ENCODE measurements at regions of chr10 and their contacts with region 1.

Region 1: GRCh38 chr10:35126530-35127296 is at the start of gene CREM:
- DNase-seq: peak; percentile 97
- H3K4me3 Mint-ChIP-seq: peak within 1 kb of the TSS; percentile 90
- H3K27ac Mint-ChIP-seq: peak within 1 kb of the TSS; percentile 98
- H3K4me1 Mint-ChIP-seq: peaks cover 47% of the 10 kb centered on the region
- H3K27me3 Mint-ChIP-seq: no peaks in the 10 kb centered on the region
- total RNA-seq, gene CREM: 189 and 190 TPM in 2 replicates

Region 2: GRCh38 chr10:35058134-35058533 is 68.6 kb before region 1 on chr10:
- intact Hi-C with region 1: no loop called
- DNase-seq: no peak
- H3K4me3 Mint-ChIP-seq: no peak overlapping the region
- H3K27ac Mint-ChIP-seq: no peak overlapping the region
- H3K4me1 Mint-ChIP-seq: peaks cover 5% of the 10 kb centered on the region
- H3K27me3 Mint-ChIP-seq: no peaks in the 10 kb centered on the region

Region 3: DNA sequence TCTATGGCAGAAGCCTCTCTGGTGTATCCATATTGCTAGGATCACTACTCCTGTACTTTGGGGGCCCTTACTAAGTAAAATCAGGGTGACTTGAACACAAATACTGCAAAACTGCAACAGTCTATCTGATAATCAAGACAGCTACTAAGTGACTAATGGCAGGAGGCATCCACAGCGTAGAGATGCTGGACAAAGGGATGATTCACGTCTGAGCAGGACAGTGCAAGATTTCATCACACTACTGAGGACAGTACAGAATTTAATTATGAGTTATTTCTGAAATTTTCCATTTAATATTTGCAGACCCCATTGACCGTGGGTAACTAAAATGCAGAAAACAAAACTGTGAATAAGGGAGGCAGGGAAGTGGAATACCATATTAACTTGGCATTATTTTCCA is 47.0 kb before region 1 on chr10:
- intact Hi-C with region 1: no loop called
- DNase-seq: no peak
- H3K4me3 Mint-ChIP-seq: no peak overlapping the region
- H3K27ac Mint-ChIP-seq: no peak overlapping the region
- H3K4me1 Mint-ChIP-seq: peaks cover 8% of the 10 kb centered on the region
- H3K27me3 Mint-ChIP-seq: no peaks in the 10 kb centered on the region

Region 4: DNA sequence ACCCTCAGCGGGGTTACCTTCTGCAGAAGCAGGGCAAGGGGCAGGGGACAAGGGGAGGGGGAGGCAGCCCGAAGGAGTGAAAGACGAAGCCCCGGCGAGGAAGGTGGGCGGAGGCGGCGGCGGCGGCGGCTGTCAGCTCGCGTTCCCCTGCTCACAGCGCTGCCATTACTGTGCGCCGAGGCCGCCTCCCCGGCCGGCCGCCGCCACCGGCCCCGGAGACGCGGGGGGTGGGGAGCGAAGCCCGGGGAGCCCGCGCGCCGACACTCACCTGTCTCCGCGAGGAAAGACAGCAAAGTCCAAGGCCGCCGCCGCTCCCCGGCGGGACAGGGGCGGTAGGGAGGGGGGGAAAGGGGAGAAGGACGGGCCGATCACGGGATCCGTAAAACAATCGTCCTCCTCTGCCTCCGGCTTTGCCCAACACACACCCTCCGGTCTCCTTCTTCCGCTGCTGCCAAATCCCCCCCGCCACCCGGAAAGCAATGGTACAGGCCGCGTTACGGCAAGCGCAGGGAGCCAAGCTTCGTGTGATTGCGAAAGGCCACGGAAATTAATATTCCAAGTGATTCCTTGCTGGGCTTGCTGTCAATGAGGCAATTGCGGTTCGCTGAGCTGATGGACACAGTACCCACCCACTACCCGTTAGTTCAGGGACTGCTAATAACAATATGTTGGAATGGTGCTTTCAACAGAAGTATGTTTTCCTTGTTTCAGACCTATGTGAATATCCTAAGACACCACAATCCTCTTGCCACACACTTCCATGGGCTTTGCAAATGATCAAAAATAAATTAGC is 36.4 kb before region 1 on chr10 and contains the start of gene CUL2:
- intact Hi-C with region 1: loop called (anchors 2 kb)
- DNase-seq: peak; percentile 91
- H3K4me3 Mint-ChIP-seq: peak within 1 kb of the TSS; percentile 94
- H3K27ac Mint-ChIP-seq: peak within 1 kb of the TSS; percentile 95
- H3K4me1 Mint-ChIP-seq: peaks cover 35% of the 10 kb centered on the region
- H3K27me3 Mint-ChIP-seq: no peaks in the 10 kb centered on the region
- total RNA-seq, gene CUL2: 43.0 and 49.0 TPM in 2 replicates

Region 5: DNA sequence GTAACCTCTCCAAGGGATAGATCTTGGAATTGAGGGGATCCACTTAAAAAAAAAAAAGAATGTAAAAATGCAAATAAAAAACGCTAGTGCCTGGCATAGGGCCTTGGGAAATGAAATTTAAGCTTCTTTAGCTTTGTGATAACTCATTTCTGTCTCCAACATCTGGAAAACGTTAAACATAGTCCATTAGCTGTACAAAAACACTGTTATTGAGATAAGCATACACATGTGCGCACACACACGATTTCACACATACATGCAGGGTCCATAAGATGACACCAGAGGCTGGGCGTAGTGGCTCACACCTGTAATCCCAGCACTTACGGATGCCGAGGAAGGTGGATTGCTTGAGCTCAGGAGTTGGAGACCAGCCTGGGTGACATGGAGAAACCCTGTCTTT is 22.8 kb before region 1 on chr10:
- intact Hi-C with region 1: no loop called
- DNase-seq: no peak
- H3K4me3 Mint-ChIP-seq: no peak overlapping the region
- H3K27ac Mint-ChIP-seq: no peak overlapping the region
- H3K4me1 Mint-ChIP-seq: no peaks in the 10 kb centered on the region
- H3K27me3 Mint-ChIP-seq: peaks cover 6% of the 10 kb centered on the region

Region 6: GRCh38 chr10:35195361-35196306 is 68.9 kb after region 1 on chr10:
- intact Hi-C with region 1: loop called (anchors 1 kb)
- DNase-seq: peak; percentile 76
- H3K4me3 Mint-ChIP-seq: peak overlapping the region; percentile 95
- H3K27ac Mint-ChIP-seq: peak overlapping the region; percentile 99
- H3K4me1 Mint-ChIP-seq: peaks cover 44% of the 10 kb centered on the region
- H3K27me3 Mint-ChIP-seq: no peaks in the 10 kb centered on the region

Region 7: GRCh38 chr10:35271086-35271858 is 144.6 kb after region 1 on chr10:
- intact Hi-C with region 1: no loop called
- DNase-seq: no peak
- H3K4me3 Mint-ChIP-seq: no peak overlapping the region
- H3K27ac Mint-ChIP-seq: no peak overlapping the region
- H3K4me1 Mint-ChIP-seq: peaks cover 15% of the 10 kb centered on the region
- H3K27me3 Mint-ChIP-seq: no peaks in the 10 kb centered on the region

Region 8: DNA sequence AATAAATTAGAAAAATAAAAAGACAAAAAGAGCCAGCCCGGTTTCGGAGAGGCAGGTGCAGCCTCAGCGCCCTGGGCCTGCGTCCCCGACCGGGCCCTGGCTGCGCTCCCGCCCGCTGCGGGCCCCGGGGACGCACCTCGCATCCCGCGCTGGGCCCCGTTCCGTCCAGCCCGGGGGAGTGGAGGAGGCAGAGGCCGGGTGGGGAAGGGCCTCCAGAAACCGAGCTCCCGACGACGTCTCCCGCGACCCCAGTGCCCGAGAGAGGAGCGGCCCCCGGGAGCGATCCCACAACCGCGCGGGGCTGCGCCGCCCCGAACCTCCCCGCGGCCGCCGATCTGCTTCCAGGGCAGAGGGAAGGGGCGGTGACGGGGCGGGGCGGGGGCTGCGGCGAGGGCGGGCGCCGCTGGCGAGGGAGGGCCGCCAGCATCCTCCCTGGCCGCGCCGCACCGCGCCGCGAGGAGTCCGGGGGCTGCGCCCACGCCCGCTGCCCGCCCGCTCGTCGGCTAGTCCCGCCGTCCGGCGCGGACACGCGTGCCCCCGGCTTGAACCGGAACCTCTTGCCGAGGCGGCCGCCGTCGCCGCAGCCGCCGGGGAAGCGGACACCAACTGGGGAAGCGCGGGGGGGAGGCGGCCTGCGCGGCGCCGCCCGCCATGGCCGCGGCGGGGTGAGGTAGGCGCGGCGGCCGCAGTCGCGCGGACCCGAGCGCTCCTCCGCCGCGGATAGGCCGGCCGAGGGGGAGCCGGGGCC is 209.5 kb after region 1 on chr10 and contains the start of gene CCNY:
- intact Hi-C with region 1: loop called (anchors 2 kb)
- DNase-seq: peak; percentile 66
- H3K4me3 Mint-ChIP-seq: peak within 1 kb of the TSS; percentile 90
- H3K27ac Mint-ChIP-seq: peak within 1 kb of the TSS; percentile 89
- H3K4me1 Mint-ChIP-seq: peaks cover 53% of the 10 kb centered on the region
- H3K27me3 Mint-ChIP-seq: no peaks in the 10 kb centered on the region
- total RNA-seq, gene CCNY: 60.4 and 67.1 TPM in 2 replicates

Region 9: GRCh38 chr10:35442028-35442427 is 315.3 kb after region 1 on chr10:
- intact Hi-C with region 1: loop called (anchors 5 kb)
- DNase-seq: no peak
- H3K4me3 Mint-ChIP-seq: no peak overlapping the region
- H3K27ac Mint-ChIP-seq: peak overlapping the region; percentile 87
- H3K4me1 Mint-ChIP-seq: peaks cover 32% of the 10 kb centered on the region
- H3K27me3 Mint-ChIP-seq: no peaks in the 10 kb centered on the region

Region 10: GRCh38 chr10:35642027-35642792 is 515.5 kb after region 1 on chr10 and contains the start of gene FZD8:
- intact Hi-C with region 1: loop called (anchors 5 kb)
- DNase-seq: peak; percentile 67
- H3K4me3 Mint-ChIP-seq: peak within 1 kb of the TSS; percentile 79
- H3K27ac Mint-ChIP-seq: no peak within 1 kb of the TSS
- H3K4me1 Mint-ChIP-seq: peaks cover 15% of the 10 kb centered on the region
- H3K27me3 Mint-ChIP-seq: peaks cover 61% of the 10 kb centered on the region
- total RNA-seq, gene FZD8: 1.0 and 1.1 TPM in 2 replicates